Left ventricle myocardium superior (tissue), 1 donor: ENCODE measurements at regions of chr11 and their contacts with region 1.

Region 1: GRCh38 chr11:130069684-130070108 is at the start of gene APLP2:
- DNase-seq: peak; percentile 99
- ATAC-seq: peak; percentile 92
- total RNA-seq, gene APLP2: 297 TPM

Region 2: GRCh38 chr11:130111948-130112830 is 42.5 kb after region 1 on chr11:
- intact Hi-C with region 1: no loop called
- DNase-seq: no peak
- ATAC-seq: no peak

Region 3: GRCh38 chr11:130124096-130124495 is 54.4 kb after region 1 on chr11:
- intact Hi-C with region 1: loop called (anchors 10 kb)
- DNase-seq: peak; percentile 77
- ATAC-seq: peak; percentile 96

Region 4: DNA sequence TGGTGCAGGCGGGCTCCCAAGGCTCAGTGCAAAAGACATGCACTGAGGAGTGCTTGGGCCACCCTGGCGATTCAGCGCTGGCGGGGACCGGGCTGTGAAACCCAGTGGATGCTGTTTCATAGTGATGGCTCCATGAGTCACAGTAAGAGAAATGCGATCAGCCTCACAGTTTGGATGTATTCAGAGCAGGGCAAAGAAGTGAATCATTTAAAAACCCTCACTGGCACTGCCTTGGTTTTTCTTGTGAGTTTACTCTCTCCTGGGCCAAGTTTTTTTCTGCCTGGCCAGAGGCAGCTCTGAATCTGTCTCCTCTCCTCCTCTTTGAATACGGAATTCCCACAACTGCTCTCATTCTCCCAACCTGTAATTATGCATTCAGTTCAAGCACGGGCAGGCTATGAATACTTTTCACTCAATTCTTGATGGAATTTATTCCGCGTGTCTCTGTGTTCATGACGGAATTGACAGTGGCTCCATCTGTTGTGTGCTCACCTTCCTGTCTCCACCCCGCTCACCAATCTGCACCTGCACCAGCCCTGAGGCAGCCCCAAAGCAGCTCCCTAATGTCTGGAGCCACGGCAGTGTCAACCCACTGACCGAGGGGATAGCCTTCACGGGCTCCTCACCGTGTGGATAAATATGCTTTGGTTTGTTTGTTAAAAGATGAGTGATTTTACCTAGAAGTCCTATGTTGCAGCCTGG is 343.9 kb after region 1 on chr11:
- intact Hi-C with region 1: no loop called
- DNase-seq: no peak
- ATAC-seq: no peak